BJ (cell line): ENCODE measurements at regions of chr11 and their contacts with region 1.

Region 1: DNA sequence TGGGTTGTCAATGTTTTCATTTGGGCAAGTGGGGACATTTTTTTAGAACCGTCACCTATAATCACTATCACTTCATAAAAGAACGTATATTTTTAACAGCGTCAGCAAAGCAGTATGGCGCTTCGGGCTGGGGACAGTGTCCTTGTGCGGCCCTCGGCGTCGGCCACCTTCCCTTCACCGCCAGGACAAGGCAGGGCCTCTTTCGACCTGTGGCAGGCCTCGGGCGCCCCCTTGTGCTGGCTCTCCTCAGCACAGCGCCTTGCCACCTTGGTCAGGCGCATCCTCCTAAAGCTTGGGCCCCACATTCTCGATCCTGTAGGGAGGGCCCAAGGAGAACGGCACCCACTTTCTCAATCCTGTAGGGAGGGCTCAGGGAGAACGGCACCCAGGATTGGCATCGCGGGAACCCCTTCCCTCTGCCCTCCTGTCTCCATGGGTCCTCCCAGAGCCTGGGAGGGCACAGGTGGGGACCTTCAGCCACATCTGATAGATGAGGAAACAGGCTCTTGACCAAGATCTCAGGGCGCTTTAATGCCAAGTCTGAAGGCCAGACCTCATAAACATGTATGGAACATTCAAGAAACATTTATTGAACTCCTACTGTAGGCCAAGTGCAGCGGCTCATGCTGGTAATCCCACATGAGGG is 11.5 kb upstream of the FADD start:
- DNase-seq: no peak
- H3K4me3 ChIP-seq: no peak overlapping the region
- H3K27me3 ChIP-seq: no peaks in the 10 kb centered on the region
- CTCF ChIP-seq: peak; percentile 94

Region 2: DNA sequence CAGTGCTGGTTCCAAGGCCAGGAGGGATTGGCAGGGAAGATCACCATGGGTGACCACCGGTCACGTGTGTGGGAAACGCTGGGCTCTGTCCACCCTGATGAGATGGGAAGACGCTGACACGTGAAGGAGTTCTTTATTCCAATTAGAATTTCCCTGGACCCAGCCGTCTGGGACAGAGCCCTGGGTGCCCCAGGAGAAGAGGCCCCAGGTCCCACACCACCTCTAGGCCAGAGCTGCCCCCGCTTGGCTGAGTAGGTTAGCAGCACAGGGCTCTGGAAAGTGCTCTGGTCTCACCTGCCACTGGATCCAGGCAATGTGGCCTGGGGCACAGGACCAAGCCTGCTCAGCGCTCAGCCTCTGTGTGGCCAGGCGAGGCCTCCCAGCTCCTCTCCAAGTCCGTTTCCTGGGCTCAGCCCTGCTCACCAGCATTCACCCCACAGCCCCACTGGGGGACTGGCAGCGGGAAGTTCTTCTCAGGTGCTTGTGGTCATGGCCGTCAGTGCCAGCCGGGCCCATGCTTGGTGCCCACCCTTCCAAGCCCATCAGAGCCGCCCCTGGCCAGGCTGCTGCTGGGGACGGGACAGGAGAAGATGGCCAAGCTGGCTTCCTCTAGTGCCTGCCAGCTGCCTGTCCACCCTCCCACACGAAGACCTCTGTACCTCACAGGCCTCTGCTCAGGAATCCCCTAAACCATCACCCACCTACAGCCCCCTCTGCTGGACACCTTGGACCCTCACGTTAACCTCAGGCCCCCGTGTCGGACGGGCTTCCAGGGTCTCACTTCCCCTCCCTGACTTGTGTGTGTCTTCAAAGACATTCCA is 310.0 kb before region 1 on chr11:
- CTCF ChIA-PET with region 1: no interaction called
- POLR2A ChIA-PET with region 1: no interaction called
- DNase-seq: no peak
- H3K4me3 ChIP-seq: no peak overlapping the region
- H3K27me3 ChIP-seq: peaks cover 5% of the 10 kb centered on the region
- CTCF ChIP-seq: 0 out of 2 replicates have a peak, but pooled peaks have one; percentile 6

Region 3: GRCh38 chr11:69909561-69910496 is 281.8 kb before region 1 on chr11:
- CTCF ChIA-PET with region 1: interaction called, 60 read pairs
- POLR2A ChIA-PET with region 1: no interaction called
- DNase-seq: no peak
- H3K4me3 ChIP-seq: no peak overlapping the region
- H3K27me3 ChIP-seq: peaks cover 8% of the 10 kb centered on the region
- CTCF ChIP-seq: peak; percentile 71